HepG2 (cell line): ENCODE measurements at regions of chr20 and their contacts with region 1.

Region 1: GRCh38 chr20:7415427-7415826 is 524.8 kb downstream of the HAO1 start:
- DNase-seq: no peak
- ATAC-seq: no peak
- H3K4me3 ChIP-seq: no peak overlapping the region
- H3K27ac ChIP-seq: no peak overlapping the region
- H3K4me1 ChIP-seq: no peaks in the 10 kb centered on the region
- H3K27me3 ChIP-seq: no peaks in the 10 kb centered on the region
- CTCF ChIP-seq: no peak
- EP300 ChIP-seq: no peak
- POLR2A ChIP-seq: no peak
- RAD21 ChIP-seq: no peak

Region 2: GRCh38 chr20:7426890-7427496 is 11.6 kb after region 1 on chr20:
- CTCF ChIA-PET with region 1: no interaction called
- POLR2A ChIA-PET with region 1: no interaction called
- in situ Hi-C with region 1: no loop called
- intact Hi-C with region 1: loop called (anchors 1 kb)
- DNase-seq: no peak
- ATAC-seq: no peak
- H3K4me3 ChIP-seq: no peak overlapping the region
- H3K27ac ChIP-seq: no peak overlapping the region
- H3K4me1 ChIP-seq: no peaks in the 10 kb centered on the region
- H3K27me3 ChIP-seq: no peaks in the 10 kb centered on the region
- CTCF ChIP-seq: no peak
- EP300 ChIP-seq: no peak
- POLR2A ChIP-seq: no peak
- RAD21 ChIP-seq: no peak